GM12878 (cell line): ENCODE measurements at regions of chr4 and their contacts with region 1.

Region 1: DNA sequence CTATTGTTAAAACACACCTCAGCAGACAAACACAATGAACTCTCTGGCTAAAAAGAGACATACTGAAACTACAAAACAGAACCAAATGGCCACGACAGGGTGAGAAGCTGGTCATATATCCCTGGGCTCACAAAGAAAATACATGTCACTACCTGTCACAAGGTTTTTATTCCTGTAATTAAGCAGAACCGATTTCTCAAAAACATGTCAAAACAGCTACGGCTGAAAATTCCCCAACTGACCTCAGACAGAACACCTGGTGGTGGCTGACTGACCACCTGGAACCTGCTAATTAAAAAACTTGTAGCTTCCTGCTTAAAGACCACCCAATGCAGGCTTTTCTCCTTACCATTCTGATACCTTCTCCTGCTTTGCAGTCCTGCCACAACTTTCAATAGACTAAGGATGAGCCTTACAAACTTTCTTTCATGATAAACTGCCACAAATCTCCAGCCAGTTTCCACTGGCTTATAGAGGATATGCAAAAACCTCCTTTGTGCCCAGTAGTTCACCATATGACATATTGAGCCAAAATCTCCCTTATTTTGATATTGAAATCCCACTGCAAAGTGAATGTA is 571.9 kb downstream of the SPOCK3 start:
- DNase-seq: peak; percentile 92
- ATAC-seq: peak; percentile 95
- H3K4me3 ChIP-seq: no peak overlapping the region
- H3K27ac ChIP-seq: peak overlapping the region; percentile 93
- H3K4me1 ChIP-seq: peaks cover 8% of the 10 kb centered on the region
- H3K27me3 ChIP-seq: no peaks in the 10 kb centered on the region
- CTCF ChIP-seq: no peak
- EP300 ChIP-seq: peak; percentile 100
- POLR2A ChIP-seq: no peak
- RAD21 ChIP-seq: no peak

Region 2: GRCh38 chr4:166481055-166481454 is 181.3 kb before region 1 on chr4:
- CTCF ChIA-PET with region 1: no interaction called
- POLR2A ChIA-PET with region 1: no interaction called
- RAD21 ChIA-PET with region 1: no interaction called
- SMC1A ChIA-PET with region 1: interaction called, 3 read pairs
- in situ Hi-C with region 1: no loop called
- intact Hi-C with region 1: loop called (anchors 5 kb)
- DNase-seq: no peak
- ATAC-seq: peak; percentile 70
- H3K4me3 ChIP-seq: no peak overlapping the region
- H3K27ac ChIP-seq: no peak overlapping the region
- H3K4me1 ChIP-seq: no peaks in the 10 kb centered on the region
- H3K27me3 ChIP-seq: no peaks in the 10 kb centered on the region
- CTCF ChIP-seq: no peak
- EP300 ChIP-seq: no peak
- POLR2A ChIP-seq: no peak
- RAD21 ChIP-seq: no peak

Region 3: GRCh38 chr4:166680796-166681195 is 18.4 kb after region 1 on chr4:
- CTCF ChIA-PET with region 1: no interaction called
- POLR2A ChIA-PET with region 1: no interaction called
- RAD21 ChIA-PET with region 1: no interaction called
- SMC1A ChIA-PET with region 1: no interaction called
- in situ Hi-C with region 1: no loop called
- intact Hi-C with region 1: no loop called
- DNase-seq: no peak
- ATAC-seq: no peak
- H3K4me3 ChIP-seq: no peak overlapping the region
- H3K27ac ChIP-seq: no peak overlapping the region
- H3K4me1 ChIP-seq: no peaks in the 10 kb centered on the region
- H3K27me3 ChIP-seq: no peaks in the 10 kb centered on the region
- CTCF ChIP-seq: no peak
- EP300 ChIP-seq: no peak
- POLR2A ChIP-seq: no peak
- RAD21 ChIP-seq: no peak

Region 4: DNA sequence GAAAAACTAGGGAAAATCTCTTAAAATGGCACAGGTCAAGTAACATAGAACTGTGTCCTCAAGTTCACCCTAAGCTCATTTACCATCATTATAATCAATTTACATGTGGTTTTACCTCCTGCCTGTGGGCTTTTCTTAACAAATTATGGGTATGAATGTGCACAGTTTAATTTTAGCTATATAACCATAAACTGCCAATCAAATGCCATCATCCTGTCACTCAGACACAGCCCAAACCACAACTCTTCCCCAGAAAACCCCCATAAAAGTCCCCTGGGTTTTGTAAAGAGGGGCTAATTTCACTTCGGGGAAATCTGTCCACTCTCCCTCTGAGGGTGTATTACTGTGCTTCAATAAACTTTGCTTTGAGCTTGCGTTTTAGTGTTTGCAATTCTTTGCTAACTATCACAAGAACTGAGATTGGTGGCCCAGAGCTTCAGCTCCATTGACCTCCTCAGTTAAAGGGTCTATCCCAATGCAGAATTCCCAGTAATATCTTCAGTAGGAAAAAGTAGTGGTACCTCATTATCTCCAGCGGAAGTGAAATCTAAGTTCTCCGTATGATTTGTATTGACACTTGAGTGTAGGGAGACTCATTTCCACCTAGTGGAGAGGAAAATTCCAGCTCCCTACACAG is 177.4 kb after region 1 on chr4:
- CTCF ChIA-PET with region 1: interaction called, 9 read pairs
- POLR2A ChIA-PET with region 1: interaction called, 9 read pairs
- RAD21 ChIA-PET with region 1: interaction called, 46 read pairs
- SMC1A ChIA-PET with region 1: interaction called, 60 read pairs
- in situ Hi-C with region 1: no loop called
- intact Hi-C with region 1: loop called (anchors 1 kb)
- DNase-seq: peak; percentile 85
- ATAC-seq: peak; percentile 90
- H3K4me3 ChIP-seq: peak overlapping the region; percentile 23; the same call in 1 of the 2 replicates
- H3K27ac ChIP-seq: peak overlapping the region; percentile 72
- H3K4me1 ChIP-seq: no peaks in the 10 kb centered on the region
- H3K27me3 ChIP-seq: no peaks in the 10 kb centered on the region
- CTCF ChIP-seq: 0 out of 6 replicates have a peak, but pooled peaks of 1 of the 3 experiments have one; percentile 11
- EP300 ChIP-seq: peak; percentile 93 to 97
- POLR2A ChIP-seq: no peak
- RAD21 ChIP-seq: peak; percentile 28; the same call in 1 of the 2 replicates

Region 5: DNA sequence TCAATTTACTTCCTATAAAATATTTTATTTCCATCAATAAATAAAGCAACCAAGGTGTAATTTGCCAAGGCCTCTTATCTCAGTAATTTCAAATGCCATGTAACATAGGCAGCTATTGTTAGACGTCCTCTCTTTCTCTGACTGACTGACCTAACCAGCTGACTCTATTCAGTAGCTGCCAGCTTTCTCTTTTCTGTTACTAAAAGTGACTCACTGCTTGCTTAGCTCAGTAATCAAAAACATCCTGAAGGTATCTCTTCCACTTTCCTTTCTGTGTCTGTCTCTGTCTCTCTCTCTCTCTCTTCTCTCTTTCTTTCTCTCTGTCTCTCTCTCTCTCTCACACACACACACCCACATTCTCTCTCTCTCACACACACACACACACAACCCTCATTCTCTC is 437.8 kb after region 1 on chr4:
- CTCF ChIA-PET with region 1: no interaction called
- POLR2A ChIA-PET with region 1: no interaction called
- RAD21 ChIA-PET with region 1: no interaction called
- SMC1A ChIA-PET with region 1: no interaction called
- in situ Hi-C with region 1: no loop called
- intact Hi-C with region 1: loop called (anchors 10 kb)
- DNase-seq: peak; percentile 32
- ATAC-seq: peak; percentile 94
- H3K4me3 ChIP-seq: no peak overlapping the region
- H3K27ac ChIP-seq: no peak overlapping the region
- H3K4me1 ChIP-seq: no peaks in the 10 kb centered on the region
- H3K27me3 ChIP-seq: no peaks in the 10 kb centered on the region
- CTCF ChIP-seq: no peak
- EP300 ChIP-seq: no peak
- POLR2A ChIP-seq: no peak
- RAD21 ChIP-seq: no peak

Region 6: GRCh38 chr4:167282171-167282864 is 620.0 kb after region 1 on chr4:
- CTCF ChIA-PET with region 1: no interaction called
- POLR2A ChIA-PET with region 1: no interaction called
- RAD21 ChIA-PET with region 1: no interaction called
- SMC1A ChIA-PET with region 1: no interaction called
- in situ Hi-C with region 1: no loop called
- intact Hi-C with region 1: loop called (anchors 10 kb)
- DNase-seq: no peak
- ATAC-seq: peak; percentile 49; the same call in 2 of the 3 replicates
- H3K4me3 ChIP-seq: no peak overlapping the region
- H3K27ac ChIP-seq: no peak overlapping the region
- H3K4me1 ChIP-seq: no peaks in the 10 kb centered on the region
- H3K27me3 ChIP-seq: no peaks in the 10 kb centered on the region
- CTCF ChIP-seq: no peak
- EP300 ChIP-seq: peak in 1 of 2 experiments; percentile 41; a peak in 1 of 4 replicates
- POLR2A ChIP-seq: no peak
- RAD21 ChIP-seq: no peak